ENCODE measurements at regions of chr17 and their contacts with region 1.

Region 1: GRCh38 chr17:39777534-39778365 is 40.0 kb downstream of the GRB7 start:
- DNase-seq: no peak
- H3K4me3 Mint-ChIP-seq: no peak overlapping the region
- H3K27ac Mint-ChIP-seq: no peak overlapping the region
- H3K4me1 Mint-ChIP-seq: peaks cover 48% of the 10 kb centered on the region
- H3K27me3 Mint-ChIP-seq: no peaks in the 10 kb centered on the region
- CTCF ChIP-seq: no peak

Region 2: DNA sequence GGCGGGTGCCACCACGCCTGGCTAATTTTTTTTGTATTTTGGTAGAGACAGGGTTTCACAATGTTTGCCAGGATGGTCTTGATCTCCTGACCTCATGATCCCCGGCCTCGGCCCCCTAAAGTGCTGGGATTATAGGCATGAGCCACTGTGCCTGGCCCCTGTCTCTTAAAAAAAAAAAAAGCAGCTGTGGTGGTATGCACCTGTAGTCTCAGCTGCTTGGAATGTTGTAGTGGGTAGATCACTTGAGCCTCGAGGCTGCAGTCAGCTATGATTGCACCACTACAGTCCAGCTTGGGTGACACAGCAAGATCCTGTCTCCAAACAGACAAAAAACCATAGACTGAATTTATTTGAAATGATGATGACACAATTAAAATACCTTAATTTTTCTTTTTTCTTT is 292.2 kb before region 1 on chr17:
- CTCF ChIA-PET with region 1: no interaction called
- intact Hi-C with region 1: no loop called
- DNase-seq: peak; percentile 61
- H3K4me3 Mint-ChIP-seq: no peak overlapping the region
- H3K27ac Mint-ChIP-seq: peak overlapping the region; percentile 21
- H3K4me1 Mint-ChIP-seq: no peaks in the 10 kb centered on the region
- H3K27me3 Mint-ChIP-seq: no peaks in the 10 kb centered on the region
- CTCF ChIP-seq: no peak

Region 3: GRCh38 chr17:39605492-39606433 is 172.0 kb before region 1 on chr17:
- CTCF ChIA-PET with region 1: interaction called, 39 read pairs
- intact Hi-C with region 1: no loop called
- DNase-seq: peak; percentile 97
- H3K4me3 Mint-ChIP-seq: peak overlapping the region; percentile 61
- H3K27ac Mint-ChIP-seq: no peak overlapping the region
- H3K4me1 Mint-ChIP-seq: peaks cover 46% of the 10 kb centered on the region
- H3K27me3 Mint-ChIP-seq: peaks cover 100% of the 10 kb centered on the region
- CTCF ChIP-seq: no peak

Region 4: GRCh38 chr17:39704821-39705551 is 72.8 kb before region 1 on chr17:
- CTCF ChIA-PET with region 1: interaction called, 34,714 read pairs
- intact Hi-C with region 1: loop called (anchors 1 kb)
- DNase-seq: peak; percentile 99
- H3K4me3 Mint-ChIP-seq: peak overlapping the region; percentile 71
- H3K27ac Mint-ChIP-seq: peak overlapping the region; percentile 67
- H3K4me1 Mint-ChIP-seq: peaks cover 92% of the 10 kb centered on the region
- H3K27me3 Mint-ChIP-seq: no peaks in the 10 kb centered on the region
- CTCF ChIP-seq: no peak

Region 5: DNA sequence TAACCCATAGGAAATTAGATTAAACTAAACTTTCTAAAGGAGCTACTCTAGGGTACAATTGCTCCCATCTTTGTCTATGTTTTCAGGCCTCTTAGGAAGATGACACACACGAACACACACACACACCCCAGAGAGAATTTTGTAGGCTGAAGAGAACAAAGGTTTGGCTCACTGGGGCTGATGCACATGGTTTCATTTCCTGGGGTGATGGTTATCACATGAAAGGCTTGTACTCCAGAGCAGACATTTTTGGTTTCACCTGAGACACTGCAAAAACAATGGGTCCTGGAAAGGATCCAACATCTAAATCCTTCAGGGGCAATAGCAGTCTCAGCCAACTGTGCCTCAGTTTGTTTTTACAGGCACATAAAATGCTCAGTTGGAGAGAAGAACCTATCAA is 22.8 kb after region 1 on chr17:
- CTCF ChIA-PET with region 1: interaction called, 881 read pairs
- intact Hi-C with region 1: no loop called
- DNase-seq: peak; percentile 85
- H3K4me3 Mint-ChIP-seq: no peak overlapping the region
- H3K27ac Mint-ChIP-seq: no peak overlapping the region
- H3K4me1 Mint-ChIP-seq: peaks cover 17% of the 10 kb centered on the region
- H3K27me3 Mint-ChIP-seq: no peaks in the 10 kb centered on the region
- CTCF ChIP-seq: no peak

Region 6: DNA sequence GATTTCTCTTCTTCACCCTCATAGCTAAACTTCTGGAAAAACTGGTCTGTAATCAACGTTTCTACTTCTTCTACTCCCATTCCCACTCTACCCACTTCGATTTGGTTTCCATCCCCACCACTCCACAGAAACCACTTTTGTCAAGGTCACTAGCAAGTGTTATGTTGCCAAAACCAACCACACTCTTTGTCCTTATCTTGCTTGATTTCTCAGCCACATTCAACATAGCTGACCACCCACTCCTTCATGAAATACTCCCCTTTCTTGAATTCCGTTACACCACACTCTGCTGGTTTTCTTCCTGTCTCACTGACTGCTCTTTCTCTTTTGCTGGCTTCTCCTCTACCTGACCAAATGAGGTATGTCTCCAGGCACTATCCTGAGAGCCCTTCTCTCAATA is 74.5 kb after region 1 on chr17:
- CTCF ChIA-PET with region 1: interaction called, 543 read pairs
- intact Hi-C with region 1: no loop called
- DNase-seq: peak; percentile 59
- H3K4me3 Mint-ChIP-seq: no peak overlapping the region
- H3K27ac Mint-ChIP-seq: no peak overlapping the region
- H3K4me1 Mint-ChIP-seq: peaks cover 10% of the 10 kb centered on the region
- H3K27me3 Mint-ChIP-seq: no peaks in the 10 kb centered on the region
- CTCF ChIP-seq: no peak

Region 7: GRCh38 chr17:39939588-39940419 is 162.1 kb after region 1 on chr17:
- CTCF ChIA-PET with region 1: interaction called, 171 read pairs
- intact Hi-C with region 1: no loop called
- DNase-seq: peak; percentile 76
- H3K4me3 Mint-ChIP-seq: no peak overlapping the region
- H3K27ac Mint-ChIP-seq: no peak overlapping the region
- H3K4me1 Mint-ChIP-seq: peaks cover 12% of the 10 kb centered on the region
- H3K27me3 Mint-ChIP-seq: peaks cover 63% of the 10 kb centered on the region
- CTCF ChIP-seq: no peak

Region 8: GRCh38 chr17:40399185-40399584 is 621.4 kb after region 1 on chr17:
- CTCF ChIA-PET with region 1: no interaction called
- intact Hi-C with region 1: no loop called
- DNase-seq: no peak
- H3K4me3 Mint-ChIP-seq: no peak overlapping the region
- H3K27ac Mint-ChIP-seq: no peak overlapping the region
- H3K4me1 Mint-ChIP-seq: no peaks in the 10 kb centered on the region
- H3K27me3 Mint-ChIP-seq: no peaks in the 10 kb centered on the region
- CTCF ChIP-seq: no peak

Region 9: GRCh38 chr17:40422990-40423616 is 645.4 kb after region 1 on chr17:
- CTCF ChIA-PET with region 1: interaction called, 26 read pairs
- intact Hi-C with region 1: no loop called
- DNase-seq: peak; percentile 73
- H3K4me3 Mint-ChIP-seq: no peak overlapping the region
- H3K27ac Mint-ChIP-seq: no peak overlapping the region
- H3K4me1 Mint-ChIP-seq: peaks cover 20% of the 10 kb centered on the region
- H3K27me3 Mint-ChIP-seq: peaks cover 24% of the 10 kb centered on the region
- CTCF ChIP-seq: no peak